A549 (cell line): ENCODE measurements at regions of chr2 and their contacts with region 1.

Region 1: DNA sequence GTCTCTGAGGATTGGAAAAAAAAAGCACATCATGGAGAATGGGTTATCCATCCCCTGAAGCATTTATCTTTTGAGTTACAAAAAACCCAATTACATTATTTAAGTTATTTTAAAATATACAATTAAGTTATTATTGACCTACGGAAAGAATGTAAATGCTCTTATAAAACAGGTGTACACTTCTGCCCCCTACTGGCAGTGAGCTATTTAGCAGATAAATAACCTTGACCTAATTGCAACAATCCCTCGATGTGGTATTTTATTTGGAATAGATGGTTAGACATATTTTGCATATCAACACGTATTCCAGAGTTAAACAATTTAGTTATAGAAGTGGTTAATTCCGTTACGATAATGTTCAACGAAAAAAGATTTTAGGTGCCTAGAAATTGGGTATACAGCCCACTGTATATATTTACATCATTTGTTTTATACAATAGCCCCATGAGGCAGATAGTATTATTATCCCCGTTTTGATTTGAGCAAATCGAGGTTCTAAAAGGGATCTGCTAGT is 9.1 kb upstream of the DAW1 start:
- DNase-seq: peak; percentile 27 to 80
- ATAC-seq: peak in 1 of 2 experiments; percentile 2; a peak in 1 of 6 replicates
- H3K4me3 ChIP-seq: no peak overlapping the region
- H3K27ac ChIP-seq: peak overlapping the region; percentile 90 to 94
- H3K4me1 ChIP-seq: peaks cover 47% of the 10 kb centered on the region
- CTCF ChIP-seq: peak; percentile 85
- EP300 ChIP-seq: no peak
- POLR2A ChIP-seq: no peak
- RAD21 ChIP-seq: peak; percentile 67 to 74

Region 2: DNA sequence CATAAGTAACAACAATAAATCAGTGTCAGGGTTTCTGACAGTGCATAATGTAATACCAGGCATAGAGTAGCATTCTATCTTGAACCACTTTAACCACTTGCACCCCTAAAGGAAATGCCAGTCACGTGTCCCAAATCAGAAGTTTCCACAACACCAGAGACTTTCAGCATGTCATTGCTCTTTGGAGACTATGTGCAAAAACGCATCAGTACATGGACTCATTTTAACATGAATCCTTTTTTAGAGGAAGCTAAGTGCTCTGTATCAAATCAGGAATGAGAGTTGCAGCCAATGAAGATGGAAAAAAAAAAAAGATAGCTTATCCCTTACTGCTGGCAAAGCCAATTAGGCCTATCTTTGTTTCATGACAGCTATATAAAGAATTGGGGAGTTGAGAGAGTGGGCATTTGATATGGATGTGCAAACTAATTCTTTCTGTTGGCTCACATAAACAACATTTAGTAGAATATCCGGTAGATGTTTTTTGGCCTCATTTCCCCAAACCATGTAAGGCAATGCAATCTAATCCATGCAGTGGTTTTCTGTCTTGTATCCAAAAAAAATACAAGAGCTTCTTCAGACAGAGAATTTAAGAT is 1415.8 kb before region 1 on chr2:
- CTCF ChIA-PET with region 1: no interaction called
- POLR2A ChIA-PET with region 1: no interaction called
- DNase-seq: no peak
- ATAC-seq: no peak
- H3K4me3 ChIP-seq: no peak overlapping the region
- H3K27ac ChIP-seq: no peak overlapping the region
- H3K4me1 ChIP-seq: peaks cover 7% of the 10 kb centered on the region; the same call in 1 of the 3 replicates
- CTCF ChIP-seq: no peak
- EP300 ChIP-seq: no peak
- POLR2A ChIP-seq: no peak
- RAD21 ChIP-seq: no peak

Region 3: DNA sequence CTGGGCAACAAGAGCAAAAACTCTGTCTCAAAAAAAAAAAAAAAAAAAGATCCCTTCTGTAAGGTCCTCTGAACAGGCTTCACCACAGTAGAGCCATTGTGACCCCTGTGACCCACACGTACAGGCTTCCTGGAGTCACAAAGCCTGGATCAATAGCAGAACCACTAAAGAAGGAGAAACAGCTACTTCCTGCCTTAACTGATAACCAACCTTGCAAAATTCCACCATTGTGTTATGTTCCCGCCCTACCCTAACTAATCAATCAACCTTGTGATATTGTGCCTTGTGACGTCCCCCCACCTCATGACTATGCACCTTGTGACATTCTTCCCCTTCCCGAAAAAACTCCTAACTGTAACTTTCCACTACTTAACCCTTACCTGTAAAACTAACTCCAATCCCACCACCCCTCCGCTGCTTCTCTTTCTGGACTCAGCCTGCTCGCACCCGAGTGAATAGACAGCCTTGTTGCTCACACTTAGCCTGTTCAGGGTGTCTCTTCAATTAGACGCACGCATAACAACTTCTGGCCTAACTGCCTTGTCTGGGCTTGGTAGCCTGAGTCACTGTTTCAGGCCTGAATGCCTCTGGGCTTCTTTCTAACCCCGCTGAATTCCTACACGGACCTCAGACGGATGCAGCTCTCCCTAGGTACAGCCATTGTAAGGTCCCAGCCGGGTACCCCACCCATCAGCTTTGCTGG is 102.7 kb before region 1 on chr2:
- CTCF ChIA-PET with region 1: no interaction called
- POLR2A ChIA-PET with region 1: no interaction called
- DNase-seq: no peak
- ATAC-seq: no peak
- H3K4me3 ChIP-seq: no peak overlapping the region
- H3K27ac ChIP-seq: peak overlapping the region; percentile 18 to 49; a peak in 2 of 6 replicates
- H3K4me1 ChIP-seq: peaks cover 24% of the 10 kb centered on the region
- CTCF ChIP-seq: no peak
- EP300 ChIP-seq: no peak
- POLR2A ChIP-seq: no peak
- RAD21 ChIP-seq: no peak

Region 4: GRCh38 chr2:227817850-227818674 is 44.2 kb before region 1 on chr2:
- CTCF ChIA-PET with region 1: interaction called, 14 read pairs
- POLR2A ChIA-PET with region 1: interaction called, 10 read pairs
- DNase-seq: peak; percentile 92 to 99
- ATAC-seq: peak; percentile 81 to 89
- H3K4me3 ChIP-seq: peak overlapping the region; percentile 45
- H3K27ac ChIP-seq: peak overlapping the region; percentile 93 to 98
- H3K4me1 ChIP-seq: peaks cover 45% of the 10 kb centered on the region
- CTCF ChIP-seq: no peak
- EP300 ChIP-seq: peak; percentile 87 to 93; a peak in 4 of 5 replicates
- POLR2A ChIP-seq: no peak
- RAD21 ChIP-seq: peak in 1 of 2 experiments; percentile 9; a peak in 1 of 5 replicates